ENCODE measurements at regions of chr9 and their contacts with region 1.

Region 1: DNA sequence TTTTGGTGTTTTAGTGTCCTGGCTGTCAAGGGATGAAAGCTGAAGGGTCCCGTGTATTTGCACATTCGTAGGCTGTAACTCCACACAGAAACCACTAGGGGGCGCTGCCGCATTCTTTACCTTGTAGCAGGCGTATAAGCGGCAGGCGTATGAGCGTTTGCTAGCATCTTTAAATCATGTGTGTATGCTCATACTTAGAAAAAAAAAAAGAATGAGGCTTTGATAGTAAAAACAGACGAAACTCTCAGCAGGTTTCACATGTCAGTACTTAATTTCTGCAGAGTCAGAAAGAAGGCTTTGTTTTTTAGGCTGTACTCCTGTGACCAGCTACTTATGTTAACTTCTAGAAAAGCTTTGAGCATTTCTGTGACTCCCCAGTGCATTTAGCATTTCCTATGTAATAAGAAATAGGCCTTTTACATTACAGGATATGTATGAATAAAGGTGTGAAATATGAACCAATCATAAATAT is 218.8 kb upstream of the ADAMTSL1 start:
- DNase-seq: peak; percentile 67
- ATAC-seq: peak; percentile 89
- H3K4me3 ChIP-seq: no peak overlapping the region
- H3K27ac ChIP-seq: no peak overlapping the region
- H3K4me1 ChIP-seq: no peaks in the 10 kb centered on the region
- H3K27me3 ChIP-seq: no peaks in the 10 kb centered on the region
- CTCF ChIP-seq: peak; percentile 84
- EP300 ChIP-seq: no peak
- POLR2A ChIP-seq: no peak
- RAD21 ChIP-seq: peak; percentile 49; the same call in 1 of the 2 replicates

Region 2: DNA sequence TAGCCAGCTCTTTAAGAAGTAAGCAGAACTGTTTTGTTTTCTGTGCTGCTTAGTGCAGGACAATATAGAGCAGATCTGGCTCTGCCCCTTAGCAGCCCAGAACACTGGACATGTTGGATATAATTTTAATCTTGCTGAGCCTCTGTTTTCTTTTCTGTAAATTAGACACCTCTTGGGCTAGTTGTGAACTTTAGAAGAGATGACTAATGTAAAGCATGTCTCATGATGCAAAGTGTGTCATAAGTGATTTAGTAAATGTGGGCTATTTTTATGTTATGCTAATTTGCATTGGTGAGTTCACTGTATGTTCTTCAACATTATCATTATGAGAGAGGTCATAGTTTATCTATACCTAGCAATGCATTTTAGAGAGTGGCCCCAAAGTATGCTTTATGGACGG is 62.7 kb after region 1 on chr9:
- CTCF ChIA-PET with region 1: no interaction called
- POLR2A ChIA-PET with region 1: no interaction called
- in situ Hi-C with region 1: no loop called
- intact Hi-C with region 1: no loop called
- DNase-seq: no peak
- ATAC-seq: no peak
- H3K4me3 ChIP-seq: no peak overlapping the region
- H3K27ac ChIP-seq: no peak overlapping the region
- H3K4me1 ChIP-seq: no peaks in the 10 kb centered on the region
- H3K27me3 ChIP-seq: no peaks in the 10 kb centered on the region; a peak in 1 of 5 replicates
- CTCF ChIP-seq: no peak
- EP300 ChIP-seq: no peak
- POLR2A ChIP-seq: no peak
- RAD21 ChIP-seq: no peak

Region 3: DNA sequence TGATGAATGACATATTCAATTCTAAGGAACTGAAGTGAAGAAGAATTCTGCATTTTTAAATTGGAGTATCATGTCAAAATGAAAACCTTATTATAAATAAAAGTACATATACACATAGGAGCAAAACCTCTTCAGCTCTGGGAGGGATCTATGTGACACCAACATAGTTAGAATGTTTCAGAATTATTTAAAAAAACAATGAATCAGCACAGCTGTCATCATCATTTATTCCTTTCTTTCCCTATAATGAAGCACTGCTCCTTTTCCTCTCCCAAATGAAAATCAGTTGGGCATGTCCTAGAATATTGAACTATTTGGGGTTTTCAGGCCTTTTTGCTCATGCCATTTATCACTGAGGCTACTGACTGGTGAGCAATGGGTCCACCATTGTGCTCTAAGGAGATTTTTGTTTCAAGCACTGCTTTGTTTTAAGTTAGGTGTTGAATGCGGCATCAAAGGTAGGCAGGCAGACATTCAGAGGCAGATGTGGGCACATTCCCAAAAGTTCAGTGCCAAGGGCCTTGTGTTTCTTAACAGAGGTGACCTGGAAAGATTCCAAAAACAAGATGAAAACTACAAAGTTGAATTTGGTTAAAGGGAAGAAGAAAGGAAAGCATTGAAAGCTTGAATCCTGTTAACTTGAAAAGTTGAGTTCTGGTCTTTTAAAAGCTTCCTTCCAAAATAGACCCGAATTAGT is 92.3 kb after region 1 on chr9:
- CTCF ChIA-PET with region 1: no interaction called
- POLR2A ChIA-PET with region 1: no interaction called
- in situ Hi-C with region 1: no loop called
- intact Hi-C with region 1: no loop called
- DNase-seq: no peak
- ATAC-seq: no peak
- H3K4me3 ChIP-seq: no peak overlapping the region
- H3K27ac ChIP-seq: no peak overlapping the region
- H3K4me1 ChIP-seq: no peaks in the 10 kb centered on the region
- H3K27me3 ChIP-seq: no peaks in the 10 kb centered on the region
- CTCF ChIP-seq: no peak
- EP300 ChIP-seq: no peak
- POLR2A ChIP-seq: no peak
- RAD21 ChIP-seq: no peak

Region 4: GRCh38 chr9:18442629-18443491 is 187.7 kb after region 1 on chr9:
- CTCF ChIA-PET with region 1: interaction called, 24 read pairs
- POLR2A ChIA-PET with region 1: no interaction called
- in situ Hi-C with region 1: loop called (anchors 5 kb)
- intact Hi-C with region 1: loop called (anchors 1 kb)
- DNase-seq: peak; percentile 49
- ATAC-seq: peak; percentile 96
- H3K4me3 ChIP-seq: no peak overlapping the region
- H3K27ac ChIP-seq: no peak overlapping the region
- H3K4me1 ChIP-seq: 0 out of 2 replicates have a peak, but pooled peaks cover 11% of the 10 kb centered on the region
- H3K27me3 ChIP-seq: 0 out of 5 replicates have a peak, but pooled peaks cover 0 to 10% of the 10 kb centered on the region in 2 experiments
- CTCF ChIP-seq: peak; percentile 76
- EP300 ChIP-seq: no peak
- POLR2A ChIP-seq: no peak
- RAD21 ChIP-seq: 0 out of 2 replicates have a peak, but pooled peaks have one; percentile 10

Region 5: GRCh38 chr9:18791074-18791473 is 535.9 kb after region 1 on chr9:
- CTCF ChIA-PET with region 1: no interaction called
- POLR2A ChIA-PET with region 1: no interaction called
- in situ Hi-C with region 1: no loop called
- intact Hi-C with region 1: loop called (anchors 1 kb)
- DNase-seq: peak; percentile 39
- ATAC-seq: peak; percentile 91
- H3K4me3 ChIP-seq: no peak overlapping the region
- H3K27ac ChIP-seq: no peak overlapping the region
- H3K4me1 ChIP-seq: no peaks in the 10 kb centered on the region
- H3K27me3 ChIP-seq: no peaks in the 10 kb centered on the region; a peak in 1 of 5 replicates
- CTCF ChIP-seq: peak; percentile 60
- EP300 ChIP-seq: no peak
- POLR2A ChIP-seq: no peak
- RAD21 ChIP-seq: no peak

Region 6: DNA sequence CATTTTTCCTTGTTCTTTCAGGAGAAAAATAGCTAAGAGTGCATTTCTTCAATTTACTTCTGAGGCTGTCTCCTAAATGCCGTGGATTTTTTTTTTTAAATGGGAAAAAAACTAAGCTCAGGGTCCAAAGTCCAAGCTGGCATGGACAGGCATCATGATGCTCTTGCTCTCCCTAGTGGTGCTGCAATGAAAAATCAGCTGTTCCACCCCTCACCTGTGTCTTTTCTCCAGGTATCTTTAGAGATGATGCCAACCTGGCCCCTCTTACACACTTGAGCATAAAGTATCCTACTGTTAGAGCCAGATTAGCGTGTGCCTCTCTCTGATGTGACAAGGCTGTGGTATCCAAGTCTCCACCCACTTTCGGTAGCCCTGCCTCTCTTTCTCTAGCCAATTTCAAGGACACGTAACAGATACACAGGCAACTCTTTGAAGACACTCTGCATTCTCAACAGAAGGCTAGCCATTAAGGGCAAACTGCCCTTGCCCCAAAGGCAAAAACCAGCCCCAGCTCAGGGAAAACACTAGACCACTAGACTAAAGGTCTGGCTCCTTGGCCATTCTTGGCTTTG is 569.0 kb after region 1 on chr9:
- CTCF ChIA-PET with region 1: no interaction called
- POLR2A ChIA-PET with region 1: no interaction called
- in situ Hi-C with region 1: loop called (anchors 25 kb)
- intact Hi-C with region 1: no loop called
- DNase-seq: peak; percentile 19
- ATAC-seq: peak; percentile 53
- H3K4me3 ChIP-seq: no peak overlapping the region
- H3K27ac ChIP-seq: no peak overlapping the region
- H3K4me1 ChIP-seq: peaks cover 21% of the 10 kb centered on the region
- H3K27me3 ChIP-seq: no peaks in the 10 kb centered on the region
- CTCF ChIP-seq: peak; percentile 50
- EP300 ChIP-seq: no peak
- POLR2A ChIP-seq: no peak
- RAD21 ChIP-seq: no peak

Region 7: GRCh38 chr9:19028835-19029451 is 773.7 kb after region 1 on chr9:
- CTCF ChIA-PET with region 1: interaction called, 13 read pairs
- POLR2A ChIA-PET with region 1: no interaction called
- in situ Hi-C with region 1: loop called (anchors 5 kb)
- intact Hi-C with region 1: loop called (anchors 1 kb)
- DNase-seq: peak; percentile 54
- ATAC-seq: peak; percentile 87
- H3K4me3 ChIP-seq: no peak overlapping the region
- H3K27ac ChIP-seq: no peak overlapping the region
- H3K4me1 ChIP-seq: no peaks in the 10 kb centered on the region
- H3K27me3 ChIP-seq: peaks cover 0 to 5% of the 10 kb centered on the region in 2 experiments; a peak in 1 of 5 replicates
- CTCF ChIP-seq: peak; percentile 77
- EP300 ChIP-seq: no peak
- POLR2A ChIP-seq: no peak
- RAD21 ChIP-seq: 0 out of 2 replicates have a peak, but pooled peaks have one; percentile 46